ENCODE measurements at regions of chr6 and their contacts with region 1.

Region 1: GRCh38 chr6:31827286-31828079 is at the start of gene HSPA1B:
- DNase-seq: peak; percentile 86 to 89 (median 87)
- H3K4me3 ChIP-seq: peak within 1 kb of the TSS; percentile 67 to 90
- H3K4me3 Mint-ChIP-seq: peak within 1 kb of the TSS; percentile 88 to 98 (median 95)
- H3K27ac ChIP-seq: peak within 1 kb of the TSS; percentile 83
- H3K27ac Mint-ChIP-seq: peak within 1 kb of the TSS; percentile 93 to 99 (median 96)
- H3K4me1 ChIP-seq: peaks cover 45% of the 10 kb centered on the region
- H3K4me1 Mint-ChIP-seq: peaks cover 18 to 55% (median 37%) of the 10 kb centered on the region in 4 donors
- H3K27me3 ChIP-seq: no peaks in the 10 kb centered on the region
- H3K27me3 Mint-ChIP-seq: no peaks in the 10 kb centered on the region
- total RNA-seq, gene HSPA1B: 58.0 to 60.8 TPM

Region 2: GRCh38 chr6:31453259-31453658 is 374.2 kb before region 1 on chr6:
- CTCF ChIA-PET with region 1: no interaction called
- POLR2A ChIA-PET with region 1: no interaction called
- intact Hi-C with region 1: no loop called
- DNase-seq: no peak
- H3K4me3 ChIP-seq: no peak overlapping the region
- H3K4me3 Mint-ChIP-seq: no peak overlapping the region
- H3K27ac ChIP-seq: no peak overlapping the region
- H3K27ac Mint-ChIP-seq: peak overlapping the region in 1 of 7 donors; percentile 35
- H3K4me1 ChIP-seq: no peaks in the 10 kb centered on the region
- H3K4me1 Mint-ChIP-seq: no peaks in the 10 kb centered on the region
- H3K27me3 ChIP-seq: peaks cover 7% of the 10 kb centered on the region
- H3K27me3 Mint-ChIP-seq: peaks cover 7 to 8% of the 10 kb centered on the region in 2 donors

Region 3: GRCh38 chr6:31580807-31581433 is 246.6 kb before region 1 on chr6:
- CTCF ChIA-PET with region 1: interaction called, 7 read pairs
- POLR2A ChIA-PET with region 1: interaction called, 12 read pairs
- intact Hi-C with region 1: no loop called
- DNase-seq: peak; percentile 83 to 89 (median 85)
- H3K4me3 ChIP-seq: peak overlapping the region; percentile 89 to 95
- H3K4me3 Mint-ChIP-seq: peak overlapping the region; percentile 95 to 100 (median 99)
- H3K27ac ChIP-seq: peak overlapping the region; percentile 92
- H3K27ac Mint-ChIP-seq: peak overlapping the region; percentile 96 to 100 (median 99)
- H3K4me1 ChIP-seq: peaks cover 71% of the 10 kb centered on the region
- H3K4me1 Mint-ChIP-seq: peaks cover 32 to 95% (median 53%) of the 10 kb centered on the region in 4 donors
- H3K27me3 ChIP-seq: no peaks in the 10 kb centered on the region
- H3K27me3 Mint-ChIP-seq: no peaks in the 10 kb centered on the region

Region 4: GRCh38 chr6:31729515-31729978 is 97.9 kb before region 1 on chr6:
- CTCF ChIA-PET with region 1: interaction called, 56 read pairs
- POLR2A ChIA-PET with region 1: interaction called, 81 read pairs
- intact Hi-C with region 1: loop called (anchors 1 kb)
- DNase-seq: peak; percentile 72 to 83 (median 77)
- H3K4me3 ChIP-seq: peak overlapping the region; percentile 87 to 96
- H3K4me3 Mint-ChIP-seq: peak overlapping the region; percentile 94 to 98 (median 97)
- H3K27ac ChIP-seq: peak overlapping the region; percentile 68
- H3K27ac Mint-ChIP-seq: peak overlapping the region; percentile 89 to 97 (median 94)
- H3K4me1 ChIP-seq: peaks cover 65% of the 10 kb centered on the region
- H3K4me1 Mint-ChIP-seq: peaks cover 32 to 70% (median 47%) of the 10 kb centered on the region in 4 donors
- H3K27me3 ChIP-seq: no peaks in the 10 kb centered on the region
- H3K27me3 Mint-ChIP-seq: no peaks in the 10 kb centered on the region

Region 5: DNA sequence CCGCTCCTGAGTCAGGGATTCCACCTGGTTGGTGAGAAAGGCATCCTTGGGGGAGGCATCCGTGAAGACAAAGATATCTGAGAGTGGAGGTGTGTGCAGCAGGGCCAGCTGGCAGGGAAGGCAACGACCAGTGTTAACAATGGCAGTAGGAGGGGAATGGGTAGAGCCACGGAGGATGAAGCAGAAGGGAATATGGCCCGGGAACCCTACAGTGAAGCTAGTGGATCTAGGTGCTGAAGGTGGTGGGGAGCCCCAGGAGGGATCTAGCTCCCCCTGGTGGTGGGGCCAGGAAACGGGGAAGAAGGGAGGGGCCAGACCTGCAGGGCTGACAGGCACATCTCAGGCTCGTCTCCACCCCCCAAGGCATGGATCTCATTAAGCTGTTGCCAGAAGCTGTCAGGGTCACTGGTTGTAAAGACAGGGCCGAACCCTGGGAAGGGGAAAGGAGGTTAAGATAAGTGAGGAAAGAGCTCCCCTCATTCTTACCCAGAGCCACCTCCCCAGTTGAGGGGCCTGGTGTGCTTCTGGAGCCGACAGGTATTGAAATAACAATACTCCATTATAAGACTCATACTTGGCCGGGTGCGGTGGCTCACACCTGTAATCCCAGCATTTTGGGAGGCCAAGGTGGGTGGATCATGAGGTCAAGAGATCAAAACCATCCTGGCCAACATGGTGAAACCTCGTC is 57.7 kb before region 1 on chr6:
- CTCF ChIA-PET with region 1: interaction called, 22 read pairs
- POLR2A ChIA-PET with region 1: interaction called, 9 read pairs
- intact Hi-C with region 1: no loop called
- DNase-seq: peak; percentile 75 to 81 (median 80)
- H3K4me3 ChIP-seq: no peak overlapping the region
- H3K4me3 Mint-ChIP-seq: peak overlapping the region in 2 of 8 donors; percentile 42 to 57
- H3K27ac ChIP-seq: no peak overlapping the region
- H3K27ac Mint-ChIP-seq: peak overlapping the region in 5 of 7 donors; percentile 0 to 65 (median 36)
- H3K4me1 ChIP-seq: peaks cover 35% of the 10 kb centered on the region
- H3K4me1 Mint-ChIP-seq: peaks cover 15 to 34% (median 24%) of the 10 kb centered on the region in 4 donors
- H3K27me3 ChIP-seq: no peaks in the 10 kb centered on the region
- H3K27me3 Mint-ChIP-seq: no peaks in the 10 kb centered on the region

Region 6: DNA sequence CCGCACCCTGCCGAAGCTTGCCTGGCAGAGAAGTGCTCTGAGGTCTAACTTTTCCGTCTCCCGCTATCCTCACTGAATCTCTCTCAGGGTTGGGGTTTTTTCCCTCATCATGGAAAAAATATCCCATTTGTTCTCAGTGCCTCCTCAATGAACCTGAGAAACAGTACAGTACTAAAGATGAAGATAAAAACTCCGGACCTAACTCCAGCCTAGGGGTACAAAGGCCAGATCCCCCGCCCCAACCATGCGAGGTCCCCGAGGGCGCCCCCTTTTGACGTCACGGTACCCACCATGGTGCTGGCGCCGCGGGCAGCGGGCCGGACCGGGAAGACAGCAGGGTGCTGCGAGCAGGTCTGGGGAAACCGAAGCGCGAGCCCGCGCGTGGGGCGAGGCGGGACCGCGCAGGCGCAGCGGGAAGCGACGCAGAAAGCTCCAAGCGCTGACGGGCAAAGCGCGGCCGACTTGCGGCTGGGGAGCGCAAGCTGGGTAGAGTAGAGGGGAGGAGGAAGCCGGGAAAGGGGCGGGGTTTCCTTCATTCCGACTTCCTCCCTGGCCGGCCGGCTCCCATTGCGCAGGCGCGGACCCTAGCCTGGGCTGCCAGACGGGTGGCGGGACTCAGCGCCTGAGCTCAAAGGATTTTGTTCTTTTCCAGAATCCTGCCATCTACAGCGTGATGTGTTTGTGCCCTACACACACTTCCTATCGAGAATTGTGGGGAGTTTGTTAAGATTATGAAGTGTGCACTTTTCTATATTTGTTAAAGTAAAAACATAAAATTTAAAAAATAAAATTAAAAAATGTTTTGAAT is 20.8 kb before region 1 on chr6 and contains the start of gene LSM2:
- CTCF ChIA-PET with region 1: interaction called, 10 read pairs
- POLR2A ChIA-PET with region 1: interaction called, 37 read pairs
- intact Hi-C with region 1: no loop called
- DNase-seq: peak; percentile 97 to 98 (median 97)
- H3K4me3 ChIP-seq: peak within 1 kb of the TSS; percentile 84 to 89
- H3K4me3 Mint-ChIP-seq: peak within 1 kb of the TSS; percentile 86 to 97 (median 90)
- H3K27ac ChIP-seq: peak within 1 kb of the TSS; percentile 80
- H3K27ac Mint-ChIP-seq: peak within 1 kb of the TSS; percentile 89 to 97 (median 93)
- H3K4me1 ChIP-seq: peaks cover 23% of the 10 kb centered on the region
- H3K4me1 Mint-ChIP-seq: peaks cover 11 to 37% (median 27%) of the 10 kb centered on the region in 4 donors
- H3K27me3 ChIP-seq: no peaks in the 10 kb centered on the region
- H3K27me3 Mint-ChIP-seq: no peaks in the 10 kb centered on the region
- total RNA-seq, gene LSM2: 30.0 to 34.6 TPM

Region 7: DNA sequence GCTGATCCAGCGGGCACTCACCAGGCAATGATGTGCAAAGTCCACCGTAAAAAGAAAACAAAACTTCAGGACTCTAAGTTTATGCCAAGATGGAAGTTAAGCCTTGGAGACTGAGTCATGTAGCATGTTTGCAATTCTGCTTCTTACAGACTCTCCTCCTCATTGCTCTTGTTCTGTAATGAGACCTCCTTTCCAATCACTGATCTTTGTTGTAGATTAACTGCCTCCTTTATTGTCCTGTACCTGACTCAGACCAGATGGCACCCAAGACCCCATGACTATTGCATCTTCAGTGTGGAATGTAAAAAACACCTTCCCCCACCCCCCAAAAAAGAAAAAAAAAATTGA is 24.0 kb after region 1 on chr6:
- CTCF ChIA-PET with region 1: no interaction called
- POLR2A ChIA-PET with region 1: no interaction called
- intact Hi-C with region 1: no loop called
- DNase-seq: no peak
- H3K4me3 ChIP-seq: no peak overlapping the region
- H3K4me3 Mint-ChIP-seq: no peak overlapping the region
- H3K27ac ChIP-seq: no peak overlapping the region
- H3K27ac Mint-ChIP-seq: peak overlapping the region in 1 of 7 donors; percentile 42
- H3K4me1 ChIP-seq: no peaks in the 10 kb centered on the region
- H3K4me1 Mint-ChIP-seq: no peaks in the 10 kb centered on the region
- H3K27me3 ChIP-seq: no peaks in the 10 kb centered on the region
- H3K27me3 Mint-ChIP-seq: no peaks in the 10 kb centered on the region

Region 8: DNA sequence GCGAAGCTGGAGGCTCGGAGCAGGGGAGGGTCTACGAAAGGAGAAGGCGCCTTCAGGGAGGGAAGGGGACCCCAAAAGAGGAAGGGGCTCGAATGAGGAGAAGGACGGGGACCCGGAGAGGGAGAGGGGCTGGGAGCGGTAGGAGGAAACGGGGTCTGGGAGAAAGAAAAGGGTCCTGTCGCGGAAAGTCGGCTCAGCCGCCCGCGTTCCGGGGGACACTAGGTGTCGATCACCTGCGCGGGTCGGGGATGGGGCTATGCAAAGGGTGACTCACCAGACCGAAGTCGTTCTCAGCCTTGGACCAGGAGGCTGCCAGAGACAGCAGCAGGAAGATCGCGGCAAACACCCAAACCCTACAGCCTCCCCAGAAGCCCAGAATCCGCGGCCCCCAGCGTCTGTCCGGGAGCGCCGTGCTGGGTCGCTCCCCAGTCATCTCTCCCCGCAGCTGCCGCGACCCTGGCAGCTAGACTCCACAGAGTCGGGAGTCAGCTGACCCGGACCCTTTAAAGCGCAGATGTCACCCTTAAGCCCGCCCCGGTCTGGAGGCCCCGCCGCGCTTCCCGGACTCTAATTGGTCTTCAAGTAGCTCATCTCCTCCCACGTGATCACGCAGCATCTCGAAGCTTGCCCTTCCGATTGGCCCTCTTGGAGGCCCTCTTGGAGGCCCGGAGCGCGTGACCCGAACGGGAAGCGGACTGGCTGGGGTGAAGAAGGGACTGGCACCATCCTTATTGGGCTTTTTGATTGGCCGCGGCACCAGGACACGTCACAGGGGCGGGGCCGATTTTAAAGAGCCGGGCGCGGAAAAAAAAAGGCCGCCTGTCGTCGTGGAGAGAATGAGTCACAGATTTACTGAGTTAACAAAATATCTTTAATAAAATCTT is 35.1 kb after region 1 on chr6 and contains the start of gene NEU1:
- CTCF ChIA-PET with region 1: interaction called, 23 read pairs
- POLR2A ChIA-PET with region 1: interaction called, 12 read pairs
- intact Hi-C with region 1: loop called (anchors 5 kb)
- DNase-seq: peak; percentile 97 to 100 (median 100)
- H3K4me3 ChIP-seq: peak within 1 kb of the TSS; percentile 88 to 95
- H3K4me3 Mint-ChIP-seq: peak within 1 kb of the TSS; percentile 87 to 96 (median 94)
- H3K27ac ChIP-seq: peak within 1 kb of the TSS; percentile 90
- H3K27ac Mint-ChIP-seq: peak within 1 kb of the TSS; percentile 94 to 98 (median 97)
- H3K4me1 ChIP-seq: peaks cover 16% of the 10 kb centered on the region
- H3K4me1 Mint-ChIP-seq: peaks cover 14 to 33% (median 23%) of the 10 kb centered on the region in 4 donors
- H3K27me3 ChIP-seq: no peaks in the 10 kb centered on the region
- H3K27me3 Mint-ChIP-seq: peaks cover 0 to 2% of the 10 kb centered on the region in 2 donors
- total RNA-seq, gene NEU1: 19.6 to 21.1 TPM

Region 9: DNA sequence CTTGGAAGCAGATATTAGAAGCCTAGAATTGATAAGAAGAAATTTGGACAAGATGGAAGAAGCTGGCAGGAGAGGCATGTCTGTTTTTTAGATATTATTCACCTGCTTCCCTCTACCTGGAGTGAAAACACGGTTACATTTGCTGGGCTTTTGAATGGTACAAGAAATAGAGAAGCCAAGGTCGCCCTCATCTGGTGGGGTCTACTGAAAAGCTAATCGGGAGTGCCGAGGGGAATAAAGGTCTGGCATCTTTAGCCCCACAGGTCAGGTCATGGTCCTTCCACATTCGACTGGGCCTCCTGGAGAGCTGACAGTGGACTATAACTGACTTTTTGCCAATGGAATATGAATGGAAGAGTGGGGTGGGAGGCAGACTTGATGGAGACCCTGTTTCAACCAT is 95.5 kb after region 1 on chr6:
- CTCF ChIA-PET with region 1: no interaction called
- POLR2A ChIA-PET with region 1: no interaction called
- intact Hi-C with region 1: no loop called
- DNase-seq: peak in 1 of 5 donors; percentile 19
- H3K4me3 ChIP-seq: no peak overlapping the region
- H3K4me3 Mint-ChIP-seq: no peak overlapping the region
- H3K27ac ChIP-seq: no peak overlapping the region
- H3K27ac Mint-ChIP-seq: peak overlapping the region in 1 of 7 donors; percentile 7
- H3K4me1 ChIP-seq: no peaks in the 10 kb centered on the region
- H3K4me1 Mint-ChIP-seq: no peaks in the 10 kb centered on the region
- H3K27me3 ChIP-seq: no peaks in the 10 kb centered on the region
- H3K27me3 Mint-ChIP-seq: no peaks in the 10 kb centered on the region

Measured in CD4-positive, alpha-beta memory T cell (primary cell).